ENCODE measurements at regions of chr15 and their contacts with region 1.

Region 1: DNA sequence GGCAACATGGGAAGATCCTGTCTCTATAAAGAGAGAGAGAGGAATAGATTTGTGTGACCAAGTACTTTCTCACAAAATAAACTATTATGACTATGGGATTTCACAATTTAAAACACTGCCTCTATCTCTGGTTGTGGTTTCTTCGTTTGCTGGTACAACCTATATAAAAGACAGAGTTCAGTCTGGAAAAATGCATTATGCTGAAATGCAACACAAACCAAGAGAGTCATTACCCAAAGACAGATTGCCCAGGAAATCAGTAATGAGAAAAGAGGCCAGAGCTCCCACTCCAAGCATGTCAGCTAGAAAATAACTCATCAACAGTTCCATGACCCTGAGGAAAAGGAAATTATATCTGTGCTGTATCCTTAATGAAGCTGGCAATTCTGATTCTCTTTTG is 23.2 kb downstream of the GPR176 start:
- DNase-seq: no peak
- ATAC-seq: no peak
- H3K4me3 ChIP-seq: no peak overlapping the region
- H3K27ac ChIP-seq: no peak overlapping the region
- H3K4me1 ChIP-seq: no peaks in the 10 kb centered on the region
- H3K27me3 ChIP-seq: no peaks in the 10 kb centered on the region
- CTCF ChIP-seq: no peak
- EP300 ChIP-seq: no peak
- POLR2A ChIP-seq: no peak
- RAD21 ChIP-seq: no peak

Region 2: DNA sequence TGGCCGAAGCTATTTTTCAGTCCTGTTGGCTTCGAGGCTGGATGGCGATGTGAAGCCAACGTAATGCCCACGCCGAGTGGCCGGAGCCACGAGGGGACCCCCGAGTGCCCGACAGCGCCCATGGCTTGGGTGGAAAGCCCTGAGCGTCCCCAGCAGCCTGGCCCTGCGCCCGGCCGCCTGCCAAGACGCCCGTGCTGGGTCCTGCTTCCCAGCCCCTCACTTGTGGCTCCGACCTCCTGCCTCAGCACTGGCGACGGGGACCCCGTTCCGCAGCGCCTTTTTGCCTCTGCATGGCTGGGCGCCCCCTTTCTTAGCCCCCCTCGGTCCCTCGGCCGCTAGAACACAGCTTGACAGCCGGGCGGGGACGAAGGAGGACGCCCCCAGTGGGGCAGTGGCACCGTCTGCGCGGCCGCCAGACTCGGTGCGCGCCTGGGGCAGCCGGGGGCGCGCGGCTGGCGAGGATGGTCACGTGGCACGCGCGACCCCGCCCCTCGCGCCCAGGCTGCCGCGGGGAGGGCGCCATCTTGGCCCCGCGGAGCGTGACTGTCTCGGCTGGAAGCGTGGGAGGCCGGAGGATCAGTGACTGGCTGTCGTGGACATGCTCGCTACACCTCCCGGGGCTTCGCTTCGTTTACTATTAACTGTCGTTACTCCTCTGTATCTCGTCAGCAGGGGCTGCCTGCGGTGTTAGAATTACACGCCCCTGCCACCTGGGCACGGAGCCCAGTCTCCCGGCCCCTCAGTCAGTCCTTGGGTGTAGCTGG is 23.8 kb after region 1 on chr15:
- CTCF ChIA-PET with region 1: no interaction called
- POLR2A ChIA-PET with region 1: no interaction called
- RAD21 ChIA-PET with region 1: no interaction called
- SMC1A ChIA-PET with region 1: no interaction called
- in situ Hi-C with region 1: no loop called
- intact Hi-C with region 1: no loop called
- DNase-seq: peak; percentile 38
- ATAC-seq: peak; percentile 94
- H3K4me3 ChIP-seq: peak overlapping the region; percentile 73
- H3K27ac ChIP-seq: peak overlapping the region; percentile 39
- H3K4me1 ChIP-seq: peaks cover 5% of the 10 kb centered on the region
- H3K27me3 ChIP-seq: peaks cover 3 to 8% of the 10 kb centered on the region in 2 experiments; a peak in 3 of 4 replicates
- CTCF ChIP-seq: 0 out of 6 replicates have a peak, but pooled peaks of 2 of the 3 experiments have one; percentile 8 to 19
- EP300 ChIP-seq: no peak
- POLR2A ChIP-seq: peak; percentile 91
- RAD21 ChIP-seq: no peak

Region 3: GRCh38 chr15:39944726-39945125 is 47.9 kb after region 1 on chr15:
- CTCF ChIA-PET with region 1: no interaction called
- POLR2A ChIA-PET with region 1: no interaction called
- RAD21 ChIA-PET with region 1: no interaction called
- SMC1A ChIA-PET with region 1: no interaction called
- in situ Hi-C with region 1: loop called (anchors 5 kb)
- intact Hi-C with region 1: no loop called
- DNase-seq: no peak
- ATAC-seq: no peak
- H3K4me3 ChIP-seq: no peak overlapping the region
- H3K27ac ChIP-seq: no peak overlapping the region
- H3K4me1 ChIP-seq: peaks cover 5% of the 10 kb centered on the region
- H3K27me3 ChIP-seq: no peaks in the 10 kb centered on the region
- CTCF ChIP-seq: no peak
- EP300 ChIP-seq: no peak
- POLR2A ChIP-seq: no peak
- RAD21 ChIP-seq: no peak

Measured in GM12878 (cell line).